Posterior cingulate gyrus (tissue), 11 donors: ENCODE measurements at regions of chr6 and their contacts with region 1.

Region 1: DNA sequence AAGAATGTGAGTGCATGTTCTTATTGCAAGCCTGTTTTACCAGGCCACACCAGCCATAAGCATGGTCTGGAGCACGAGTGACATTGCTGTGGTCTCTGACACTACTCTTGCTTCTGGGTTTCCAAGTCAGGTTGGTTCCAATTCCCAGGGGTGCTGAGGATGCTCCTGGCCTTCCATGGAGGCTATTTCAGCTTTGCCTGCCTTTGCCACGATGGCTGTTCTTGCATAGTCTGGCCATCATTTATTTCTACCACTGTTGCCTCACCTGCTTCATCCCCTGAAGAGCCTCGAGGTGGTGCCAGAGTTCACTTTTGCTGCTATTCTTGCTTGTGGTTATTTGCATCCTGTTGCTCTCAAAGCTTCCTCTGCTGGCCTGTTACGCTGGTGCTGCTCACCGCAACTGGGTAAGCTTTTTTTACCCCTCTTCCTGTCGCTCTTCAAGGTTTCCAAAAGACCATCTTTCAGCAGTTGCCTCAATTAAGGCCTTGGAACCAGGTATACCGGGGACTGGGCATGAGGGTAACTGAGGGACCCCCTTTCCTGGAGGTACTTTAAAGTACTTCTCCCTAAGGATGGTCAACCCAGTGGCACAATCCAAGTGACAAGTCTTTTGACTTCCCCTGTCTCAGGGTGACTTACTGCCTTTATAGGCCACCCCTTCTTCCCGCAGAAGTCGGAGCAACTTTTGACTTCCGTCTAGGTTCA is 64.5 kb downstream of the AKAP7 start:
- DNase-seq: no peak

Region 2: GRCh38 chr6:130810307-130811030 is 389.3 kb before region 1 on chr6:
- intact Hi-C with region 1: no loop called
- DNase-seq: no peak

Region 3: GRCh38 chr6:131627724-131628682 is 428.3 kb after region 1 on chr6 and contains the start of gene MED23:
- intact Hi-C with region 1: loop called (anchors 10 kb)
- DNase-seq: peak; percentile 92 to 99 (median 96)